HEK293 (cell line): ENCODE measurements at regions of chr17 and their contacts with region 1.

Region 1: GRCh38 chr17:68398691-68399637 is 58.3 kb downstream of the WIPI1 start:
- H3K4me3 ChIP-seq: no peak overlapping the region
- H3K27ac ChIP-seq: no peak overlapping the region
- H3K4me1 ChIP-seq: no peaks in the 10 kb centered on the region; the same call in 1 of the 2 replicates
- CTCF ChIP-seq: peak; percentile 93

Region 2: DNA sequence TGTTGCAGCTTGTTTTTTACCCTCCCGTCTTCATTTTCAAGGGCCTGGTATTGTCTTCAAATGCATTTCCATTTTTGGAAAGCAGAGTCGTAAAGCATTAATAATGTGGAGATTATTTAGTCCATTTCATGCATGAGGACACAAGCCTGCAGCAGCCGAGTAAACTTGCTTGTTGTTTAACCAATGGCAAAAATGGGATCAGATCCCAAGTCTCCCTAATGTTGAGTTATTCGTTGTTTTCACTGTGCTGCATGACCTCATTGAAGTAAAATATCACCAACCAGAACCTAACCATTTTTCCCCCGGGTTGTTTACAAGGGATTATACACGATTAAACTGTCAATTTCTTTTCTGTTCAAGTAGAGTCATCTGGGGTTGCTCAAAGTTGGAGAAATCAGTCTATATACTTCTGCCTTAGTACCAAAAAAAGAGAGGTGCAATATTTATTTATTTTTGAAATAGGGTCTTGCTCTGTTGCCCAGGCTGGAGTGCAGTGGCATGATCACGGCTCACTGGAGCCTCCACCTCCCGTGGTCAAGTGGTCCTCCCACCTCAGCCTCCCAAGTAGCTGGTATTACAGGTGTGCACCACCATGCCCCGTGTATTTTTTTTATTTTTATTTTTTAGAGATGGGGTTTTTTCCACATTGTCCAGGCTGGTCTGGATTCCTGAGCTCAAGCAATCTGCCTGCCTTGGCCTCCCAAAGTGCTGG is 138.8 kb before region 1 on chr17:
- CTCF ChIA-PET with region 1: interaction called, 63 read pairs
- POLR2A ChIA-PET with region 1: no interaction called
- H3K4me3 ChIP-seq: no peak overlapping the region
- H3K27ac ChIP-seq: no peak overlapping the region
- H3K4me1 ChIP-seq: no peaks in the 10 kb centered on the region
- CTCF ChIP-seq: no peak

Region 3: GRCh38 chr17:68305142-68305541 is 93.8 kb before region 1 on chr17:
- CTCF ChIA-PET with region 1: interaction called, 10 read pairs
- POLR2A ChIA-PET with region 1: no interaction called
- H3K4me3 ChIP-seq: no peak overlapping the region
- H3K27ac ChIP-seq: no peak overlapping the region
- H3K4me1 ChIP-seq: no peaks in the 10 kb centered on the region
- CTCF ChIP-seq: no peak

Region 4: GRCh38 chr17:68386240-68387087 is 12.5 kb before region 1 on chr17:
- CTCF ChIA-PET with region 1: interaction called, 23 read pairs
- POLR2A ChIA-PET with region 1: no interaction called
- H3K4me3 ChIP-seq: no peak overlapping the region
- H3K27ac ChIP-seq: no peak overlapping the region
- H3K4me1 ChIP-seq: peaks cover 6% of the 10 kb centered on the region
- CTCF ChIP-seq: no peak